ENCODE measurements at regions of chr20 and their contacts with region 1.

Region 1: GRCh38 chr20:49888345-49888966 is 26.9 kb downstream of the SPATA2 start:
- DNase-seq: peak; percentile 42 to 54 (median 46)
- H3K4me3 ChIP-seq: no peak overlapping the region
- H3K4me3 Mint-ChIP-seq: no peak overlapping the region
- H3K27ac ChIP-seq: no peak overlapping the region
- H3K27ac Mint-ChIP-seq: peak overlapping the region in 6 of 7 donors; percentile 39 to 79 (median 70)
- H3K4me1 ChIP-seq: peaks cover 8% of the 10 kb centered on the region
- H3K4me1 Mint-ChIP-seq: peaks cover 6 to 19% (median 9%) of the 10 kb centered on the region in 4 donors
- H3K27me3 ChIP-seq: no peaks in the 10 kb centered on the region
- H3K27me3 Mint-ChIP-seq: no peaks in the 10 kb centered on the region

Region 2: DNA sequence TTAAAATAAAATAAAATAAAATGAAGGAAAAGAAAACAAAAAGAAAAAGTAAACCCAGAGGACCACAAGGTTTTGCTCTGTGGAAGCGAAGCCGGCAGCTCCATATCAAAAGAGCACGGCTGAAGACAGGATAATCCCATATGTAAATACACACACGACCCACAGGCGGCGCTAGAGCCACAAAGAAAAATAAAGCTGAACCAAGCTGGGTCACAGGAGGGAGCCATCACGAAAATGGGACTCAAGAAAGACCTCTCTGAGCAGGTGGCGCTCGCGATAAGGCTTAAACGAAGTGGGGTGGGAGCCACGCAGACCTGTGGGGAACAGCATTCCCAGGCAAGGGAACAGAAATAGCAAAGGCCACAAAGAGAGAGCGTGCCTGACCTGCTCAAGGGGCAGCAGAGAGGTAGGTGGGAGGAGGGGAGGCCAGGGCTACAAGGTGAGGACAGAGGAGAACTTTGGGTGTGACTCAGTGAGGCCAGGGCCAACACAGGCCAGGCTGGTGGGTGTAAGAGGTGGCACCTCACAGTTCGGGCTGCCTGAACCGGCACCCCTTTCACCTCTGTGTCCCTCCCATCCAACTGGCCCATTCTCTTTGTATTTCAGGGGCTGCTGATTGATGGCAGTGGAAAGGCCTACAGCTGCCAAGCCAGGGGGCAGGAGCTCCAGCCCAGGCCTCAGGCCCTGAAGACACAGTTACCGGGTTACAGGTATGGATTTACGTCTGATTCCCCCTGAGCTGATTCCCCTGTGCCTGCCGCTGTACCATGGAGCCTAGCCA is 346.5 kb before region 1 on chr20:
- CTCF ChIA-PET with region 1: interaction called, 11 read pairs
- POLR2A ChIA-PET with region 1: no interaction called
- intact Hi-C with region 1: no loop called
- DNase-seq: peak; percentile 46 to 53 (median 52)
- H3K4me3 ChIP-seq: no peak overlapping the region
- H3K4me3 Mint-ChIP-seq: no peak overlapping the region
- H3K27ac ChIP-seq: no peak overlapping the region
- H3K27ac Mint-ChIP-seq: peak overlapping the region in 1 of 7 donors; percentile 62
- H3K4me1 ChIP-seq: no peaks in the 10 kb centered on the region
- H3K4me1 Mint-ChIP-seq: peaks cover 0 to 5% (median 1%) of the 10 kb centered on the region in 4 donors
- H3K27me3 ChIP-seq: no peaks in the 10 kb centered on the region
- H3K27me3 Mint-ChIP-seq: peaks cover 2 to 4% of the 10 kb centered on the region in 2 donors

Region 3: GRCh38 chr20:49928401-49929141 is 40.1 kb after region 1 on chr20:
- CTCF ChIA-PET with region 1: no interaction called
- POLR2A ChIA-PET with region 1: no interaction called
- intact Hi-C with region 1: loop called (anchors 5 kb)
- DNase-seq: peak; percentile 77 to 79 (median 78)
- H3K4me3 ChIP-seq: no peak overlapping the region
- H3K4me3 Mint-ChIP-seq: peak overlapping the region in 4 of 8 donors; percentile 16 to 60 (median 44)
- H3K27ac ChIP-seq: no peak overlapping the region
- H3K27ac Mint-ChIP-seq: peak overlapping the region in 6 of 7 donors; percentile 5 to 81 (median 37)
- H3K4me1 ChIP-seq: no peaks in the 10 kb centered on the region
- H3K4me1 Mint-ChIP-seq: peaks cover 1 to 5% (median 4%) of the 10 kb centered on the region in 4 donors
- H3K27me3 ChIP-seq: no peaks in the 10 kb centered on the region
- H3K27me3 Mint-ChIP-seq: peaks cover 1% of the 10 kb centered on the region in 2 donors

Region 4: GRCh38 chr20:51059862-51060261 is 1171.4 kb after region 1 on chr20:
- CTCF ChIA-PET with region 1: no interaction called
- POLR2A ChIA-PET with region 1: no interaction called
- intact Hi-C with region 1: no loop called
- DNase-seq: no peak
- H3K4me3 ChIP-seq: no peak overlapping the region
- H3K4me3 Mint-ChIP-seq: no peak overlapping the region
- H3K27ac ChIP-seq: no peak overlapping the region
- H3K27ac Mint-ChIP-seq: no peak overlapping the region
- H3K4me1 ChIP-seq: no peaks in the 10 kb centered on the region
- H3K4me1 Mint-ChIP-seq: peaks cover 0 to 4% (median 2%) of the 10 kb centered on the region in 4 donors
- H3K27me3 ChIP-seq: peaks cover 5% of the 10 kb centered on the region
- H3K27me3 Mint-ChIP-seq: peaks cover 23 to 36% of the 10 kb centered on the region in 2 donors

Measured in CD4-positive, alpha-beta memory T cell (primary cell).